Mammary epithelial cell (primary cell): ENCODE measurements at regions of chr17 and their contacts with region 1.

Region 1: DNA sequence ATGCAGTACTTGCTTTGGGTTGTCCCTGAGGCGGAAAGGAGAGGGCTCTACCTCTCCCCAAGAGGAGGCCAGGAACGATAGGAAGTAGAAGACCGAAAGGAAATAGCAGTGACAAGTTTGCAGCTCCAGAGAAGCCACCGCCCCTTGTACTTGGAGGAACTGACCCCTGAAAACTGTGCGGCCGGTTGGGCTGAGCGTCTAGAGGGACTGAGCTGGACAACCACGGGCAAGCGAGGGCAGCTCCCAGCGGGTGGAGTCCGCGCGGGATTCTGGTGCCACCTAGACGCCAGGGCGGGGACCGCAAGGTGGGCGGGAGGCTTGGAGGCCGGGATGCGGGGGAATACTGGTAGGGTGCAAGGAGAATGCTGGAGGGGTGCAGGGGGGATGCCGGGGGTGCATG is 1.3 kb upstream of the SLC6A4 start:
- DNase-seq: peak; percentile 30
- H3K4me3 ChIP-seq: peak overlapping the region in 1 of 3 experiments; percentile 22
- H3K27ac ChIP-seq: no peak overlapping the region
- H3K4me1 ChIP-seq: peaks cover 16% of the 10 kb centered on the region
- H3K27me3 ChIP-seq: peaks cover 47% of the 10 kb centered on the region
- CTCF ChIP-seq: peak; percentile 3 to 72

Region 2: GRCh38 chr17:29341751-29342150 is 895.0 kb before region 1 on chr17:
- CTCF ChIA-PET with region 1: interaction called, 12 read pairs
- dilution Hi-C with region 1: no loop called
- in situ Hi-C with region 1: no loop called
- intact Hi-C with region 1: no loop called
- DNase-seq: peak; percentile 57
- H3K4me3 ChIP-seq: no peak overlapping the region
- H3K27ac ChIP-seq: no peak overlapping the region
- H3K4me1 ChIP-seq: no peaks in the 10 kb centered on the region
- H3K27me3 ChIP-seq: no peaks in the 10 kb centered on the region
- CTCF ChIP-seq: no peak

Region 3: GRCh38 chr17:30124273-30124796 is 112.4 kb before region 1 on chr17:
- CTCF ChIA-PET with region 1: interaction called, 8 read pairs
- dilution Hi-C with region 1: no loop called
- in situ Hi-C with region 1: no loop called
- intact Hi-C with region 1: loop called (anchors 1 kb)
- DNase-seq: no peak
- H3K4me3 ChIP-seq: no peak overlapping the region
- H3K27ac ChIP-seq: no peak overlapping the region
- H3K4me1 ChIP-seq: no peaks in the 10 kb centered on the region
- H3K27me3 ChIP-seq: no peaks in the 10 kb centered on the region
- CTCF ChIP-seq: no peak

Region 4: DNA sequence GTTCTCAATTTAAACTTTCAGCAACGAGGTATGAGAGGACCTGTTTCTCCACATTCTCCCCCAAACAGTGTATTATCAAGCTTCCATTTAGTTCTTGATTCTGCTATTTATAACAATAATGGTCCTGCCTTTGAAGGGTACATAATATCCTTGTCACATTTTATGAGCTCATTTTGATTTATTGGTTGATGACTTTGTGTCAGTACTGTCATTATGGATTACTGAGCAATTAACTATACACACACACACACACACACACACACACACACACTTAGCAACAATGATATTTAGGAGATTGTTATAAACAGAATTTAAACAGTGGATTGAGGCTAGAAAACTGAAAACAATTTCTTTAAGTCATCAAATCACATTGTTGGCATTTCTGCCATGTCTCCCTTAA is 90.0 kb after region 1 on chr17:
- CTCF ChIA-PET with region 1: interaction called, 3 read pairs
- dilution Hi-C with region 1: loop called (anchors 5 kb)
- in situ Hi-C with region 1: no loop called
- intact Hi-C with region 1: no loop called
- DNase-seq: no peak
- H3K4me3 ChIP-seq: no peak overlapping the region
- H3K27ac ChIP-seq: no peak overlapping the region
- H3K4me1 ChIP-seq: no peaks in the 10 kb centered on the region
- H3K27me3 ChIP-seq: peaks cover 9% of the 10 kb centered on the region
- CTCF ChIP-seq: no peak